MCF 10A (cell line): ENCODE measurements at regions of chr15 and their contacts with region 1.

Region 1: GRCh38 chr15:66851226-66852071 is 149.4 kb downstream of the SMAD6 start:
- DNase-seq: peak; percentile 72
- H3K4me3 Mint-ChIP-seq: no peak overlapping the region
- H3K27ac Mint-ChIP-seq: no peak overlapping the region
- H3K4me1 Mint-ChIP-seq: peaks cover 8% of the 10 kb centered on the region
- H3K27me3 Mint-ChIP-seq: no peaks in the 10 kb centered on the region
- CTCF ChIP-seq: peak; percentile 93

Region 2: GRCh38 chr15:66603301-66604179 is 247.9 kb before region 1 on chr15:
- CTCF ChIA-PET with region 1: interaction called, 16 read pairs
- POLR2A ChIA-PET with region 1: interaction called, 3 read pairs
- intact Hi-C with region 1: loop called (anchors 1 kb)
- DNase-seq: peak; percentile 57
- H3K4me3 Mint-ChIP-seq: no peak overlapping the region
- H3K27ac Mint-ChIP-seq: no peak overlapping the region
- H3K4me1 Mint-ChIP-seq: no peaks in the 10 kb centered on the region
- H3K27me3 Mint-ChIP-seq: no peaks in the 10 kb centered on the region
- CTCF ChIP-seq: peak; percentile 78

Region 3: GRCh38 chr15:66619151-66619903 is 232.1 kb before region 1 on chr15:
- CTCF ChIA-PET with region 1: interaction called, 32 read pairs
- POLR2A ChIA-PET with region 1: interaction called, 5 read pairs
- intact Hi-C with region 1: loop called (anchors 1 kb)
- DNase-seq: peak; percentile 68
- H3K4me3 Mint-ChIP-seq: no peak overlapping the region
- H3K27ac Mint-ChIP-seq: no peak overlapping the region
- H3K4me1 Mint-ChIP-seq: no peaks in the 10 kb centered on the region
- H3K27me3 Mint-ChIP-seq: no peaks in the 10 kb centered on the region
- CTCF ChIP-seq: peak; percentile 86

Region 4: DNA sequence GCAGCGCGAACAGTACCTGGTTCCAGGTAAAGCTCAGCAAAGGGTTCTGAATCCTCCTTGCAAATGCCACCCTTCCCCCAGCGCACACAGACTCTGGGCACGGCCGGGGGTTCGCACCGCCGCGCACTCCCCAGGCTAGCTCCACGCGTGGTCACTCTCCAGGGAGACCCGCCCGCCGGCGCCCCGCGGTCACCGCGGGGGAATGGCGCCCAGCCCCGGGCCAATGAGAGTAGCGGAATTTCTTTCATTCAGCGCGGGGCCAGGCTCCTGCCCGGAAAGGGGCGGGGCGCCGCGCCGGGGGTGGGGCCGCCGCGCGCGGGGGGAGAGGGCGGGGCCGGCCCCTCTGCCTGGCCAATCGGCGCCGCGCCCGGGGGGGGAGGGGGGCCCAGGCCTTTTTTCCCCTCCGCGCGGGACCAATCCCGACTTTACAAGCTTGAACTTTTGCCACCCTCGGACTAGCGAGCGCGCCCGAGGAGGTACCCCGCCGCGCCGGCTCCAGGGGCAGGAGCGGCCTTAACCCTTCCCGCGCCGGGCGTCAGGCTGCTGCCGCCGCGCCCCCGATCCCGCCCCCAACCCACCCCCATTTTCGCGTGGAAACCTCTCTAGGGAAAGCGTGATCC is 150.5 kb before region 1 on chr15:
- CTCF ChIA-PET with region 1: interaction called, 9 read pairs
- POLR2A ChIA-PET with region 1: interaction called, 3 read pairs
- intact Hi-C with region 1: loop called (anchors 5 kb)
- DNase-seq: peak; percentile 95
- H3K4me3 Mint-ChIP-seq: peak overlapping the region; percentile 79
- H3K27ac Mint-ChIP-seq: no peak overlapping the region
- H3K4me1 Mint-ChIP-seq: peaks cover 12% of the 10 kb centered on the region
- H3K27me3 Mint-ChIP-seq: peaks cover 18% of the 10 kb centered on the region
- CTCF ChIP-seq: no peak

Region 5: DNA sequence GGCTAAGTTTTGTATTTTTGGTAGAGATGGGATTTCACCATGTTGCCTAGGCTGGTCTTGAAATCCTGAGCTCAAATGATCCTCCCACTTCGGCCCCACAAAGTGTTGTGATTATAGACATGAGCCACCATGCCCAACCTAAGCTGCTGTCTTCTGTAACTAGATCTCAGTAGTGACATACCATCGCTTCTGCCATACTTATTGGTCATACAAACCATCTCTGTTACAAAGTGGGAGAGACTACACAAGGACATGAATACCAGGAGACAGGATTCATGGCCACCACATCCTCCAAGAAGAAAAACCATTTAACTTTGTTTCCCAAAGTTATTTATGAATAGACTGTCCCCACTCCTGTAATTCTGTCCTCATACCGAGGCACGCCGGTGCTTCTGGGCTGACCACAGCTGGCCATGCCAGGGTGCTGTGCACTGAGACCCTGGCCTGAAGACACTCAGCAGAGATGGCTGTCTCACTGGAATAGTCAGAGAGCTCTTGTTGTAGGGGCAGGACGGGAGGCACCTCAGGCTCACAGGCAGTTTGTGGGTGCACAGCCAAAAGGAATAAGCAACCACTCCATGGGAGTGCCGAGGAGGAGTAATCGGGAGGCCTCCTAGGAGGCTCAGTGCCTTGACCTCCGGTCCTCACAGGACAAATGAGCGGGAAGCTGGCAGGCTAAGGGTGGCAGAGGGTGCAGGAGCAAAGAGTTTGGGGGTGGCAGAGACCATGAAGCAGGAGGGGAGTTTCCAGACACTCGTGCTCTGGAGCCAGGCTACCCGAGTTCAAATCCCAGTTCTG is 67.9 kb before region 1 on chr15:
- CTCF ChIA-PET with region 1: interaction called, 97 read pairs
- POLR2A ChIA-PET with region 1: interaction called, 6 read pairs
- intact Hi-C with region 1: no loop called
- DNase-seq: no peak
- H3K4me3 Mint-ChIP-seq: no peak overlapping the region
- H3K27ac Mint-ChIP-seq: no peak overlapping the region
- H3K4me1 Mint-ChIP-seq: no peaks in the 10 kb centered on the region
- H3K27me3 Mint-ChIP-seq: no peaks in the 10 kb centered on the region
- CTCF ChIP-seq: no peak

Region 6: DNA sequence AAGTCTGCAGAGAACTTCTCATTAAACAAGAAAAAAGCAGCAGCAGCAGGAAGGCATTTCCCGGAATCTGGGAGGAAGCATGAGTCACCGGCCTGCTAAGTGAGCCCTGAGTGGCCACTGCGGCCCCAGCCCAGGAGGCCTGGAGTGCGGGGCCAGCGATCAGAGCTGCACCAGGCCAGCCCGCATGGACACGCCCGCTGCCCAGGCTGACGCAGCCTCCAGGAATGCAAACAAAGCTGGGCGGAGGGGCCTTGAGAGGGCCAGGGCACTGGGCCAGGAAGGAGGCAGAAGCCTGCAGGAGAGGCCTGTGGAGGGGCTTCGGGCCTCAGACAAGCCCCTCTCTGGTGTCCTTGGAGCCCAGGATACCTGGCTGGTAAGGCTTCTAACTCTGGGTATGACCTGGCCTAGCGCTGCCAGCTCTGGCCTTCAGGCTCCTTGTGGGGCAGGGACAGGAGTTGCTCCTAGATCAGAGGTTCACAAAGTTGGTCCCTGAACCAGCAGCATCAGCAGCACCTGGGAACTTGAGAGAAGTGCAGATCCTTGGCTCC is 48.2 kb before region 1 on chr15:
- CTCF ChIA-PET with region 1: interaction called, 10 read pairs
- POLR2A ChIA-PET with region 1: interaction called, 3 read pairs
- intact Hi-C with region 1: no loop called
- DNase-seq: peak; percentile 97
- H3K4me3 Mint-ChIP-seq: peak overlapping the region; percentile 50
- H3K27ac Mint-ChIP-seq: peak overlapping the region; percentile 98
- H3K4me1 Mint-ChIP-seq: peaks cover 32% of the 10 kb centered on the region
- H3K27me3 Mint-ChIP-seq: no peaks in the 10 kb centered on the region
- CTCF ChIP-seq: no peak